CD8-positive, alpha-beta memory T cell (primary cell): ENCODE measurements at regions of chr17 and their contacts with region 1.

Region 1: GRCh38 chr17:5031365-5032082 is 3.7 kb downstream of the SLC52A1 start:
- DNase-seq: peak; percentile 72 to 89 (median 76)
- H3K4me3 ChIP-seq: peak overlapping the region; percentile 73
- H3K4me3 Mint-ChIP-seq: peak overlapping the region; percentile 83 to 92 (median 86)
- H3K27ac ChIP-seq: no peak overlapping the region
- H3K27ac Mint-ChIP-seq: peak overlapping the region; percentile 41 to 96 (median 90)
- H3K4me1 ChIP-seq: peaks cover 19% of the 10 kb centered on the region
- H3K4me1 Mint-ChIP-seq: peaks cover 13 to 46% (median 20%) of the 10 kb centered on the region in 3 donors
- H3K27me3 ChIP-seq: no peaks in the 10 kb centered on the region
- H3K27me3 Mint-ChIP-seq: peaks cover 0 to 1% of the 10 kb centered on the region in 2 donors

Region 2: GRCh38 chr17:4527566-4528125 is 503.9 kb before region 1 on chr17:
- CTCF ChIA-PET with region 1: no interaction called
- POLR2A ChIA-PET with region 1: no interaction called
- DNase-seq: no peak
- H3K4me3 ChIP-seq: no peak overlapping the region
- H3K4me3 Mint-ChIP-seq: no peak overlapping the region
- H3K27ac ChIP-seq: no peak overlapping the region
- H3K27ac Mint-ChIP-seq: no peak overlapping the region
- H3K4me1 ChIP-seq: no peaks in the 10 kb centered on the region
- H3K4me1 Mint-ChIP-seq: no peaks in the 10 kb centered on the region
- H3K27me3 ChIP-seq: no peaks in the 10 kb centered on the region
- H3K27me3 Mint-ChIP-seq: peaks cover 0 to 1% of the 10 kb centered on the region in 2 donors

Region 3: DNA sequence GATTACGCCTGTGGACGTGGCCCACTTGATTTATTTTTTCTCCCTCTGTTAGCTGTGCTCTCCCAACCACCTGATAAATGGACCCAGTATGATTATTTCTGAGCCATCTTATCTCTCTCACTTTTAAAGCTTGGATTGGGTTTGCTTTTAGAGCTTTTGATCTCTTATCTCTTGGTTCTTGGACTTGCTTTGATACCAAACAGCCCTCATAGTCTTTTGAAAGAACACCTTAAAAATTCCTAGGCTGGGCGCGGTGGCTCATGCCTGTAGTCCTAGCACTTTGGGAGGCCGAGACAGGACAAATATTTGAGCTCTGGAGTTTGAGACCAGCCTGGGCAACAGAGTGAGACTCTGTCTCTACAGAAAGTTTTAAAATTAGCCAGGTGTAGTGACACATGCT is 421.4 kb before region 1 on chr17:
- CTCF ChIA-PET with region 1: no interaction called
- POLR2A ChIA-PET with region 1: no interaction called
- DNase-seq: no peak
- H3K4me3 ChIP-seq: no peak overlapping the region
- H3K4me3 Mint-ChIP-seq: no peak overlapping the region
- H3K27ac ChIP-seq: no peak overlapping the region
- H3K27ac Mint-ChIP-seq: no peak overlapping the region
- H3K4me1 ChIP-seq: no peaks in the 10 kb centered on the region
- H3K4me1 Mint-ChIP-seq: no peaks in the 10 kb centered on the region
- H3K27me3 ChIP-seq: no peaks in the 10 kb centered on the region
- H3K27me3 Mint-ChIP-seq: peaks cover 6 to 33% of the 10 kb centered on the region in 2 donors

Region 4: DNA sequence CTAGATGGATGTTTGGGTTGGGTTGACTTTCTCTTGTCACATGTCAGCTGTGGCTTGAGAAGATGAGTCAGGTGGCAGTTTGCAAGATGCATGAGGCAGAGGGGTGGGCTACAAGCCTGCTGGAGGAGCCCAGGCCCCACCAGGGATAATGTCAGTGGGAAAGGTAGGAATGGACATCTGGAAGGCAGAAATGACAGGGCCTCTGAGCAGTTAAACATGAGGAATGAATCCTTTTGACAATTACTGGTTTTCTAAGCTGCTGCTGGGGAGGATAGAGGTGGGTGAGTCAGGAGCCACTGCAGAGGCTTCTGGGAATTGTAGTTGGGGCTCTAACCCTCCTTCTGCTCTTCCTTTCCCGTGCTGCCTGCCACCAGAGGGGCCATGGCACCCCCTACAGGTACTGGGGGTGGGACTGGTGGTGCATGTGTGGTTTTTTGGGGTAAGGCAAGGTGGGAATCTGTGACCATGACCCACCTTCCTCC is 12.0 kb before region 1 on chr17:
- CTCF ChIA-PET with region 1: interaction called, 10 read pairs
- POLR2A ChIA-PET with region 1: interaction called, 3 read pairs
- DNase-seq: peak in 3 of 5 donors; percentile 35 to 69 (median 49)
- H3K4me3 ChIP-seq: no peak overlapping the region
- H3K4me3 Mint-ChIP-seq: no peak overlapping the region
- H3K27ac ChIP-seq: no peak overlapping the region
- H3K27ac Mint-ChIP-seq: peak overlapping the region in 3 of 8 donors; percentile 18 to 89 (median 26)
- H3K4me1 ChIP-seq: no peaks in the 10 kb centered on the region
- H3K4me1 Mint-ChIP-seq: peaks cover 0 to 8% (median 0%) of the 10 kb centered on the region in 3 donors
- H3K27me3 ChIP-seq: no peaks in the 10 kb centered on the region
- H3K27me3 Mint-ChIP-seq: no peaks in the 10 kb centered on the region

Region 5: GRCh38 chr17:5042157-5043022 is 10.9 kb after region 1 on chr17:
- CTCF ChIA-PET with region 1: interaction called, 27 read pairs
- POLR2A ChIA-PET with region 1: interaction called, 11 read pairs
- DNase-seq: peak in 3 of 5 donors; percentile 17 to 60 (median 22)
- H3K4me3 ChIP-seq: peak overlapping the region; percentile 72
- H3K4me3 Mint-ChIP-seq: peak overlapping the region; percentile 73 to 92 (median 86)
- H3K27ac ChIP-seq: peak overlapping the region; percentile 57
- H3K27ac Mint-ChIP-seq: peak overlapping the region; percentile 80 to 98 (median 94)
- H3K4me1 ChIP-seq: peaks cover 43% of the 10 kb centered on the region
- H3K4me1 Mint-ChIP-seq: peaks cover 29 to 64% (median 47%) of the 10 kb centered on the region in 3 donors
- H3K27me3 ChIP-seq: no peaks in the 10 kb centered on the region
- H3K27me3 Mint-ChIP-seq: no peaks in the 10 kb centered on the region

Region 6: GRCh38 chr17:5049314-5049895 is 17.9 kb after region 1 on chr17:
- CTCF ChIA-PET with region 1: interaction called, 27 read pairs
- POLR2A ChIA-PET with region 1: interaction called, 12 read pairs
- DNase-seq: peak; percentile 65 to 91 (median 78)
- H3K4me3 ChIP-seq: peak overlapping the region; percentile 6
- H3K4me3 Mint-ChIP-seq: peak overlapping the region; percentile 62 to 84 (median 72)
- H3K27ac ChIP-seq: peak overlapping the region; percentile 49
- H3K27ac Mint-ChIP-seq: peak overlapping the region; percentile 93 to 99 (median 96)
- H3K4me1 ChIP-seq: peaks cover 54% of the 10 kb centered on the region
- H3K4me1 Mint-ChIP-seq: peaks cover 32 to 60% (median 46%) of the 10 kb centered on the region in 3 donors
- H3K27me3 ChIP-seq: no peaks in the 10 kb centered on the region
- H3K27me3 Mint-ChIP-seq: no peaks in the 10 kb centered on the region

Region 7: GRCh38 chr17:5065227-5065744 is 33.8 kb after region 1 on chr17:
- CTCF ChIA-PET with region 1: interaction called, 125 read pairs
- POLR2A ChIA-PET with region 1: interaction called, 8 read pairs
- DNase-seq: no peak
- H3K4me3 ChIP-seq: no peak overlapping the region
- H3K4me3 Mint-ChIP-seq: no peak overlapping the region
- H3K27ac ChIP-seq: no peak overlapping the region
- H3K27ac Mint-ChIP-seq: no peak overlapping the region
- H3K4me1 ChIP-seq: no peaks in the 10 kb centered on the region
- H3K4me1 Mint-ChIP-seq: peaks cover 0 to 7% (median 6%) of the 10 kb centered on the region in 3 donors
- H3K27me3 ChIP-seq: no peaks in the 10 kb centered on the region
- H3K27me3 Mint-ChIP-seq: peaks cover 0 to 1% of the 10 kb centered on the region in 2 donors

Region 8: GRCh38 chr17:5110816-5111215 is 79.3 kb after region 1 on chr17:
- CTCF ChIA-PET with region 1: no interaction called
- POLR2A ChIA-PET with region 1: no interaction called
- DNase-seq: no peak
- H3K4me3 ChIP-seq: peak overlapping the region; percentile 81
- H3K4me3 Mint-ChIP-seq: peak overlapping the region; percentile 76 to 96 (median 86)
- H3K27ac ChIP-seq: no peak overlapping the region
- H3K27ac Mint-ChIP-seq: peak overlapping the region; percentile 20 to 90 (median 54)
- H3K4me1 ChIP-seq: peaks cover 12% of the 10 kb centered on the region
- H3K4me1 Mint-ChIP-seq: peaks cover 20 to 32% (median 28%) of the 10 kb centered on the region in 3 donors
- H3K27me3 ChIP-seq: peaks cover 5% of the 10 kb centered on the region
- H3K27me3 Mint-ChIP-seq: peaks cover 5 to 9% of the 10 kb centered on the region in 2 donors

Region 9: DNA sequence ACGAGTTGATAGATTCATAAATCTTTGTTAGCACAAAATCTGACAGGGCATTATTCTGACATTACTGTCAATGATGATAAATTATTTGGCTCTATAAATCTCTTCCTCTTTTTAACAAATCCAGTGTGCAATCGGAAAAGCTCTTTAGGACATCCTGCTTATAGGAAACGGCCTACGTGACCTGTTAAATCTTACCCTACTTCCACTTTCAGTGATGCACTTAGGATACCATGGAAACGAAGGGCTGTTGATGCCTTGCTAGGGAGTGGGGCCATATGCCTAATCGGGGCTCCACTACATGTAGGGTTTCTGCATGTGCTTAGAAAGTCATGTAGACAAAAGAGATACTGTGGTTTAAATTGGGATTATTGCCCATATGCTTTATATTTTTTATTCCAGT is 132.9 kb after region 1 on chr17:
- CTCF ChIA-PET with region 1: no interaction called
- POLR2A ChIA-PET with region 1: no interaction called
- DNase-seq: no peak
- H3K4me3 ChIP-seq: no peak overlapping the region
- H3K4me3 Mint-ChIP-seq: no peak overlapping the region
- H3K27ac ChIP-seq: no peak overlapping the region
- H3K27ac Mint-ChIP-seq: no peak overlapping the region
- H3K4me1 ChIP-seq: no peaks in the 10 kb centered on the region
- H3K4me1 Mint-ChIP-seq: no peaks in the 10 kb centered on the region
- H3K27me3 ChIP-seq: no peaks in the 10 kb centered on the region
- H3K27me3 Mint-ChIP-seq: peaks cover 4 to 30% of the 10 kb centered on the region in 2 donors